GM12878 (cell line): ENCODE measurements at regions of chr7 and their contacts with region 1.

Region 1: GRCh38 chr7:22488643-22489462 is 11.1 kb downstream of the STEAP1B start:
- DNase-seq: peak; percentile 9
- ATAC-seq: peak; percentile 91
- H3K4me3 ChIP-seq: no peak overlapping the region
- H3K27ac ChIP-seq: no peak overlapping the region
- H3K4me1 ChIP-seq: no peaks in the 10 kb centered on the region
- H3K27me3 ChIP-seq: no peaks in the 10 kb centered on the region; a peak in 1 of 4 replicates
- CTCF ChIP-seq: peak; percentile 78 to 92 (median 89)
- EP300 ChIP-seq: no peak
- POLR2A ChIP-seq: no peak
- RAD21 ChIP-seq: peak; percentile 99

Region 2: DNA sequence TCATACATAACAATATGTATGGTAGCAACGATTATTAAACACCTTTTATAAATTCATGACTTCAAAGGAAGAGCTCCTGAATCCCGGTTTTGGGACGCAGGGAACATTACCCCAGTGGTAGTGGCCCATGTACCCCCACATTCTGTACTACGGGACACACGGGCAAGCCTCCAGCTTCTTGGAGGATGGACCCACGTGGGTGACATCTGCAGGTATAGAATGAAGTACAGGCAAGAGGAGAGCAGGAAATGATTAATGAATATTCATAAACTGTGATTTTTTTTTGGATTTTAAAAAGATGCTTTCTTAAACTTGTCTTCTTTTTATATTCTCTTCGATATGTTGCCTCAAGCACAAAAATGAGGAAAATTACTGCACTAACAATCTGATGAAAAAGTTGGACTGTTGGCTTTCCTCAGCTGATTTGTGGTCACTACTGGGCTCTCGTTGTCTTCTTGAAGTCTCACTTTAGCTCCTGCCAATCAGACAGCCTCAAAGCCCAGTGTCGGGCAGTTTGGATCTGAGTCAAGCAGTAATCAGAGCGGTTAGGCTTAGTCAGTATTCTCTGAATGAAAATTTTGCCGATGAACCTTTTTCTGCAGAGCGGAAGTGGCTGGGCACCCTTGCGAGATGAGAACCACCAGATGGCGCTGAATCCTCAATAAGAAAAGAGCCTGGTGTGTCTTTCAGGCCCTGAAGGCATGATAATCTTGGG is 385.4 kb before region 1 on chr7:
- CTCF ChIA-PET with region 1: interaction called, 74 read pairs
- POLR2A ChIA-PET with region 1: no interaction called
- RAD21 ChIA-PET with region 1: interaction called, 20 read pairs
- SMC1A ChIA-PET with region 1: interaction called, 12 read pairs
- in situ Hi-C with region 1: loop called (anchors 5 kb)
- intact Hi-C with region 1: loop called (anchors 1 kb)
- DNase-seq: peak; percentile 25
- ATAC-seq: peak; percentile 98
- H3K4me3 ChIP-seq: no peak overlapping the region
- H3K27ac ChIP-seq: no peak overlapping the region
- H3K4me1 ChIP-seq: no peaks in the 10 kb centered on the region
- H3K27me3 ChIP-seq: peaks cover 0 to 2% of the 10 kb centered on the region in 2 experiments; a peak in 1 of 4 replicates
- CTCF ChIP-seq: peak; percentile 70 to 73 (median 72)
- EP300 ChIP-seq: no peak
- POLR2A ChIP-seq: no peak
- RAD21 ChIP-seq: peak; percentile 78

Region 3: GRCh38 chr7:22452142-22452959 is 36.5 kb before region 1 on chr7:
- CTCF ChIA-PET with region 1: interaction called, 6 read pairs
- POLR2A ChIA-PET with region 1: no interaction called
- RAD21 ChIA-PET with region 1: interaction called, 3 read pairs
- SMC1A ChIA-PET with region 1: no interaction called
- in situ Hi-C with region 1: no loop called
- intact Hi-C with region 1: loop called (anchors 2 kb)
- DNase-seq: no peak
- ATAC-seq: peak; percentile 65
- H3K4me3 ChIP-seq: no peak overlapping the region; the same call in 1 of the 2 replicates
- H3K27ac ChIP-seq: no peak overlapping the region
- H3K4me1 ChIP-seq: peaks cover 7% of the 10 kb centered on the region
- H3K27me3 ChIP-seq: no peaks in the 10 kb centered on the region; a peak in 1 of 4 replicates
- CTCF ChIP-seq: peak; percentile 53 to 85 (median 81)
- EP300 ChIP-seq: no peak
- POLR2A ChIP-seq: no peak
- RAD21 ChIP-seq: peak; percentile 70